Kidney (tissue), 22 donors: ENCODE measurements at regions of chr14 and their contacts with region 1.

Region 1: DNA sequence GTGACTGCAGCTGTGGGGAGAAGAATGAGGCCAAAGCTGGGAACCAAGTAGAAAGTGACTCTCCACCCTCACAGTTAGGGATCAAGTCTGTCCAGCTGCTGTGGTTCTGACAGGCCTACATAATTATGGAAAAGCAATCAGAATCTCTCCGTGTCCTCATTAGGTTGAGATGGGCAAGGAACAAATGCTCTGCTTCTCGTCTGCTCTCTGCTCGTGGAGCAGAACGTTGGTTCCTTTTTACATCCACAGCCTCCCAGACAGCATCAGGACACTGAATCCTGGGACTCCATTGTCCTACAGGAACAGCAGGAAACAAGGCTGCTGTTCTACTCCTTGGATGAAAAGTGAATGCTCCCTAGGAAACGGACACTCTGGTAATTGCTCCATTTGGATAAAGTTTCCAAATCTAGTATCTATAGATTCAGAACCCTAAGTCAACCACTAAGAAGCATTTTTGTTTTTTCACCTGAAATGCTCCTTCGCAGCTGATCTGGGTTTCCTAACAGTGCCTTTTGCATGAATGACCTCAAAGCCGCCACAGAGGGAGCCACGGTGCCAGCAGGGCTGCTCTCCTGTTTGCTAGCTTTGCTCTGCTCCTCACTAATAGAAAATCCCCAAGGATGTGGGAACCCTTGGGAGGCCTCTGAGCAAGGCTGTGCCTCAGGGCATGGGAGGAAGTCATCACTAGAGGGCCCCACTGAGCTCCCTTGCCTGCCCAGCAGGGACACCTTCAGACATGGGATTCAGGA is 102.0 kb downstream of the EGLN3 start:
- DNase-seq: peak; percentile 65 to 92 (median 90)
- H3K4me3 ChIP-seq: no peak overlapping the region
- H3K27ac ChIP-seq: no peak overlapping the region
- H3K4me1 ChIP-seq: no peaks in the 10 kb centered on the region
- H3K27me3 ChIP-seq: no peaks in the 10 kb centered on the region
- CTCF ChIP-seq: peak; percentile 59

Region 2: GRCh38 chr14:34098045-34098984 is 249.4 kb after region 1 on chr14:
- intact Hi-C with region 1: loop called (anchors 5 kb)
- DNase-seq: peak in 4 of 5 donors; percentile 50 to 69 (median 62)
- H3K4me3 ChIP-seq: no peak overlapping the region
- H3K27ac ChIP-seq: no peak overlapping the region
- H3K4me1 ChIP-seq: no peaks in the 10 kb centered on the region
- H3K27me3 ChIP-seq: no peaks in the 10 kb centered on the region
- CTCF ChIP-seq: peak; percentile 65